ENCODE measurements at regions of chr6 and their contacts with region 1.

Region 1: GRCh38 chr6:151690768-151691562 is 116.5 kb upstream of the ESR1 start:
- DNase-seq: peak; percentile 65
- H3K4me3 Mint-ChIP-seq: peak overlapping the region; percentile 67
- H3K27ac Mint-ChIP-seq: peak overlapping the region; percentile 87
- H3K4me1 Mint-ChIP-seq: peaks cover 19% of the 10 kb centered on the region
- H3K27me3 Mint-ChIP-seq: no peaks in the 10 kb centered on the region

Region 2: GRCh38 chr6:149749594-149750135 is 1941.3 kb before region 1 on chr6 and contains the start of gene PCMT1:
- CTCF ChIA-PET with region 1: no interaction called
- intact Hi-C with region 1: no loop called
- DNase-seq: peak; percentile 88
- H3K4me3 Mint-ChIP-seq: peak within 1 kb of the TSS; percentile 86
- H3K27ac Mint-ChIP-seq: peak within 1 kb of the TSS; percentile 80
- H3K4me1 Mint-ChIP-seq: peaks cover 42% of the 10 kb centered on the region
- H3K27me3 Mint-ChIP-seq: no peaks in the 10 kb centered on the region
- total RNA-seq, gene PCMT1: 71.9 to 74.5 TPM

Region 3: GRCh38 chr6:151440930-151441329 is 250.0 kb before region 1 on chr6:
- CTCF ChIA-PET with region 1: no interaction called
- intact Hi-C with region 1: loop called (anchors 2 kb)
- DNase-seq: no peak
- H3K4me3 Mint-ChIP-seq: no peak overlapping the region
- H3K27ac Mint-ChIP-seq: no peak overlapping the region
- H3K4me1 Mint-ChIP-seq: peaks cover 38% of the 10 kb centered on the region
- H3K27me3 Mint-ChIP-seq: no peaks in the 10 kb centered on the region

Region 4: GRCh38 chr6:151723152-151723551 is 32.2 kb after region 1 on chr6:
- CTCF ChIA-PET with region 1: no interaction called
- intact Hi-C with region 1: loop called (anchors 1 kb)
- DNase-seq: peak; percentile 76
- H3K4me3 Mint-ChIP-seq: no peak overlapping the region
- H3K27ac Mint-ChIP-seq: no peak overlapping the region
- H3K4me1 Mint-ChIP-seq: peaks cover 29% of the 10 kb centered on the region
- H3K27me3 Mint-ChIP-seq: peaks cover 3% of the 10 kb centered on the region

Region 5: DNA sequence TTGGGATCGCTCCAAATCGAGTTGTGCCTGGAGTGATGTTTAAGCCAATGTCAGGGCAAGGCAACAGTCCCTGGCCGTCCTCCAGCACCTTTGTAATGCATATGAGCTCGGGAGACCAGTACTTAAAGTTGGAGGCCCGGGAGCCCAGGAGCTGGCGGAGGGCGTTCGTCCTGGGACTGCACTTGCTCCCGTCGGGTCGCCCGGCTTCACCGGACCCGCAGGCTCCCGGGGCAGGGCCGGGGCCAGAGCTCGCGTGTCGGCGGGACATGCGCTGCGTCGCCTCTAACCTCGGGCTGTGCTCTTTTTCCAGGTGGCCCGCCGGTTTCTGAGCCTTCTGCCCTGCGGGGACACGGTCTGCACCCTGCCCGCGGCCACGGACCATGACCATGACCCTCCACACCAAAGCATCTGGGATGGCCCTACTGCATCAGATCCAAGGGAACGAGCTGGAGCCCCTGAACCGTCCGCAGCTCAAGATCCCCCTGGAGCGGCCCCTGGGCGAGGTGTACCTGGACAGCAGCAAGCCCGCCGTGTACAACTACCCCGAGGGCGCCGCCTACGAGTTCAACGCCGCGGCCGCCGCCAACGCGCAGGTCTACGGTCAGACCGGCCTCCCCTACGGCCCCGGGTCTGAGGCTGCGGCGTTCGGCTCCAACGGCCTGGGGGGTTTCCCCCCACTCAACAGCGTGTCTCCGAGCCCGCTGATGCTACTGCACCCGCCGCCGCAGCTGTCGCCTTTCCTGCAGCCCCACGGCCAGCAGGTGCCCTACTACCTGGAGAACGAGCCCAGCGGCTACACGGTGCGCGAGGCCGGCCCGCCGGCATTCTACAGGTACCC is 116.8 kb after region 1 on chr6 and contains the start of gene ESR1:
- CTCF ChIA-PET with region 1: interaction called, 3 read pairs
- intact Hi-C with region 1: loop called (anchors 5 kb)
- DNase-seq: peak; percentile 26
- H3K4me3 Mint-ChIP-seq: peak within 1 kb of the TSS; percentile 69
- H3K27ac Mint-ChIP-seq: no peak within 1 kb of the TSS
- H3K4me1 Mint-ChIP-seq: peaks cover 13% of the 10 kb centered on the region
- H3K27me3 Mint-ChIP-seq: peaks cover 43% of the 10 kb centered on the region
- total RNA-seq, gene ESR1: 0.52 to 0.54 TPM

Region 6: GRCh38 chr6:151847066-151847465 is 156.1 kb after region 1 on chr6:
- CTCF ChIA-PET with region 1: no interaction called
- intact Hi-C with region 1: no loop called
- DNase-seq: peak; percentile 33
- H3K4me3 Mint-ChIP-seq: no peak overlapping the region
- H3K27ac Mint-ChIP-seq: no peak overlapping the region
- H3K4me1 Mint-ChIP-seq: no peaks in the 10 kb centered on the region
- H3K27me3 Mint-ChIP-seq: no peaks in the 10 kb centered on the region

Region 7: DNA sequence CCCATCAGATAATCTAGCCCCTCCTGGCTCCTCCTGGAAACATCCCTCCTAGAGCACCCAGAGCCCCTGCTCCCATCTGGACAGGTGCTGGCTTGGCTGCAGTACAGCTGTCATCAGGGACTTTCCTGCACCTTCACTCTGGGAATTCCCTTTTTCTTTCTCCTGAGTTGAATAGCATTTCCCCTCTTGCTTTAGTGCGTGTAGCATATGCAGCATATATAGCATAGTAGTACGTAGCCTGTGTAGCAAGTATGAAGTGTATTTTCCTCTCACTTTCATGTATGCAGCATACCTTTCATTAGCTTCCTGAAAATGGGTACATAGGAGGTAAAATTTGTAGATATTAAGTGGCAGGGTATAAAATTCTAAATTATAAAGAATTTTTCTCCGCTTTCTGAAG is 469.4 kb after region 1 on chr6:
- CTCF ChIA-PET with region 1: interaction called, 5 read pairs
- intact Hi-C with region 1: loop called (anchors 1 kb)
- DNase-seq: peak; percentile 64
- H3K4me3 Mint-ChIP-seq: no peak overlapping the region
- H3K27ac Mint-ChIP-seq: peak overlapping the region; percentile 85
- H3K4me1 Mint-ChIP-seq: peaks cover 28% of the 10 kb centered on the region
- H3K27me3 Mint-ChIP-seq: no peaks in the 10 kb centered on the region

Region 8: DNA sequence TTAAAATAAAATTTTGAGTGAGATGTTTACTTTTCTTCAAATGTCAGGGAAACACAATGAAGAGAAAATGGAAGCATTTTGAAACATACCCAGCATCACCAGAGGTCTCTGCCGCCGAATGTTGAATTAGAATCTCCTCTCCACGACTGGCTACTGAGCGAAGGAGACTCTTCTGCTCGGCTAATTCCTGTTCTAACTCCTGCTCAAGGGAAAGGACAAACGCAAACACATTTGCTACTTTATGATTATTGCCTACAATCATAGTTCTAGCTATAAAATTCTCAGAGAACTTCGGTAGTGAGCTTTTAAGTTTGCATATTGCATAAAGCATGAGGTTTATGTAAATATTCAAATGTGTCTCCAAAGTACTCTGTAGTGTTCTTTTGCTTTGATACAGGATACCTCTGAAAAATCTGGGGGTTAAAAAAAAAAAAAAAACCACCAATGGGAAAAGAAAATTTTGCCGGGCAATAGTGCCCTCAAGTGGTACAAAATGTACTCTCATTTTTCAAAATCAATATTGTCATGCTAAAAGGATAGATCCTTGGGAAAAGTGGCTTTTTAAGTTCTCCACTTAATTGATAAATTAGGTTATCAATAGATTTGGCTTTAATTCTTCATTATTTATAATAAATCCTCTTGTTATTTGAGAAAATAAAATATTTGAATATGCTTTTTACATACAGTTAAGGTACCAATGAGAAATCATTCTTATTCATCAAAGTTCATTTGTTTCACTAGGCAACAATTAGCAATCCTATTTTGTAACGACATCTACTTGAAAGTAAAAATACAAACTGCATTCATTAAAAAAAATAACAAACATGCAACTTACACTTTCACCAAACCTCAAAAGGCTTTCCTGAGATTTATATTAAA is 577.2 kb after region 1 on chr6:
- CTCF ChIA-PET with region 1: interaction called, 16 read pairs
- intact Hi-C with region 1: loop called (anchors 1 kb)
- DNase-seq: peak; percentile 53
- H3K4me3 Mint-ChIP-seq: no peak overlapping the region
- H3K27ac Mint-ChIP-seq: no peak overlapping the region
- H3K4me1 Mint-ChIP-seq: no peaks in the 10 kb centered on the region
- H3K27me3 Mint-ChIP-seq: no peaks in the 10 kb centered on the region

Region 9: DNA sequence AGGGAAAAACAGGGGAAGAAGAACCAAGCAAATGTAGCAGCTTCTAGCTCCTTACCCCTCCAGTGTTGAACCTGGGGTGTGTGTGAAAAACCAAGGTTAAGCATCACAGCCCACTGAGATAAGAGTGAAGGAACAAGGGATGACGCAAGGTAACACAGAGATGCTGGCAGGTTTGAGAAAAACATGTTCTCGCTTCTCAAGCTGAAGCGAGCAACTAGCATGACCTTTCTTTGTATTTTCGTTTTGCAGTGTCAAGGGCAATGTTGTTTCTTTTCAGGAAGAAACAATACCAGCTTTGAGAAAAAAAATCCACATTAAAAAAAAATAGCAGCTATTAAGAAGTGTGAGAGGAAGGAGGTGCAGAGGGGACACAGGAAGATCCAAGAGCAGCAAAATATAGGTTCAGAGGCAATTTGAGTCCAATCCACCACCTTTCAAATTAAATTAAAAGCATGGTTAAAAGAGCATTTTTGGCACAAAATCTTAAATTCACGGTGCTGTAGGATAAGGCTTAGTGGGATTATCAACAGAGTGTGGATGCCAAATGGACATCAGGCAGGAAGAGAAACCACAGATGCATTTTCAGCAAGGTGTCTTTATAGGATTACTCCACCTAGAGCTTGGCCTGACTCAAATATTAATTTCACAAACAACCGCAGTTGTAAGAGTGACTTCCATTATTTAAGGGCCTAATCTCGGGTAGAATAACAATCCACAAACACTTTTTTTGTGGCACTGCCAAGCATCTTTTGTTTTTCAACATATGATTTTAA is 875.3 kb after region 1 on chr6:
- CTCF ChIA-PET with region 1: no interaction called
- intact Hi-C with region 1: no loop called
- DNase-seq: no peak
- H3K4me3 Mint-ChIP-seq: no peak overlapping the region
- H3K27ac Mint-ChIP-seq: no peak overlapping the region
- H3K4me1 Mint-ChIP-seq: no peaks in the 10 kb centered on the region
- H3K27me3 Mint-ChIP-seq: peaks cover 5% of the 10 kb centered on the region

Measured in activated naive CD4-positive, alpha-beta T cell treated with anti-CD3 and anti-CD28 coated beads for 36 hours (primary cell).